Caki2 (cell line): ENCODE measurements at regions of chr5 and their contacts with region 1.

Region 1: DNA sequence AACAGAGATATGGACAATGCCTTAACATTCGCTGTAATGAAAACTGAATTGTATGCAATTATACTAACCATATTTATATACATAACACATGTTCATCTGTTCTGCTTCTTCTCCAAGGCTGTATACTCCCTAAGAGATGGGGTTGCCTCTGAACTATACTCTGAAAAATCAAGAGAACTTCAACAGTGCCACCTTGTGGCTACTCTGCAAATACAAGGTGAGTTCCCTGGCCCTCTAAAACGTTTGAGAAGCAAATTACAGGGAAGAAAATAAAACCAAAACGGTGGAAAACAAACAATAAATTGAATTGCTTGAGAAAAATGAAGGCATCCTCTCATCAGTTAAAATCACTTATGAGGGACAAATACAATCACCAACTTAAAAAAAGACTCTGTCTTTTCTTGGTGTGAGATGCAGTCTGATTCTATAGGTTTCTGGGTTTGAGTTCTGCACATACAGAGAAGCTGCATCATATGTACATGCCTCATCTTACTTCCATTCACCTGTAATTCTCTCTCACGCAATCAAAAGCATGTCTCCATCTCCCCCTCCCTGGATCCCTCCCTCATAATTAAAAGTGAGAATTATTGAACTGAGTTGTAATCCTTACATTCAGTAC is 98.6 kb downstream of the FBXW11 start:
- DNase-seq: peak; percentile 57

Region 2: GRCh38 chr5:171355302-171355724 is 552.5 kb before region 1 on chr5:
- in situ Hi-C with region 1: no loop called
- DNase-seq: no peak

Region 3: DNA sequence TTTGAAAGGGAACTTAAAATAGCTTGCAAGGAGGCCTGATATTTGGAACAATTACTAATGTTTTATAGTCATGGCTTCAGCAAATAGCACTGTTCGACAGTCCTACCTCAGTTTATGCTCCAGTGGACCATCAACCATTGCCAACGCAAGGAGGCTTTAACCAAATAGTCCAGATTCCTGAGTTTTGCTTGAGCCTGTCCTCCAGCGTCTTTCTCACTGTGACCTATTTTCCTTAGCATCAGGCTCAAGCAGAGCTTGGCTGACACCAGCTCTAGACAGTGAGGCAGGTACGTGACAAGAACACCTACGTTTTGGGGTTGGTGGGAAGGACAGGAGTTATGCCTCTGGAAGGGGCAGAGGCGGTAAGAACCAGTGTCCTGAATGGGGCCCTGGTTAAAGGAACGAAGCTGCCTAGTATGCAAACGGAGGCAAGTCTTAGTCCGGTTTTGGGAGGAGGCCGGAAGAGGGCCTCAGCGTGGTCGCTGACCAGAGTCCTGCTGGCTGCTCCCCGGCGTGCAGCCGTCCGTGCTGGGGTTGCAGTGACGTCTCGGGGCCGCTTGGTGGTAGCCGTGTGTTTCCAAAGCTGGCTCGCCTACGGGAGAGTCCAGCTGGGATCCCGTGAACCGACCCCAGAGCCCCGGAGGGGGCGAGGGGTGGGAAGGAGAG is 489.4 kb before region 1 on chr5:
- in situ Hi-C with region 1: loop called (anchors 25 kb)
- DNase-seq: peak; percentile 81

Region 4: GRCh38 chr5:171750311-171750788 is 157.5 kb before region 1 on chr5:
- in situ Hi-C with region 1: no loop called
- DNase-seq: peak; percentile 9

Region 5: GRCh38 chr5:172007175-172008110 is 99.6 kb after region 1 on chr5:
- in situ Hi-C with region 1: no loop called
- DNase-seq: no peak

Region 6: GRCh38 chr5:172150514-172151425 is 242.9 kb after region 1 on chr5:
- in situ Hi-C with region 1: no loop called
- DNase-seq: no peak